ENCODE measurements at regions of chr1 and their contacts with region 1.

Region 1: GRCh38 chr1:89198491-89199072 is at the start of gene GBP4:
- DNase-seq: peak; percentile 65
- H3K4me3 Mint-ChIP-seq: peak within 1 kb of the TSS; percentile 92
- H3K27ac Mint-ChIP-seq: peak within 1 kb of the TSS; percentile 98
- H3K4me1 Mint-ChIP-seq: peaks cover 84% of the 10 kb centered on the region
- H3K27me3 Mint-ChIP-seq: no peaks in the 10 kb centered on the region
- total RNA-seq, gene GBP4: 22.9 to 23.2 TPM

Region 2: GRCh38 chr1:88983791-88984559 is 214.6 kb before region 1 on chr1:
- CTCF ChIA-PET with region 1: interaction called, 4 read pairs
- intact Hi-C with region 1: loop called (anchors 2 kb)
- DNase-seq: peak; percentile 42
- H3K4me3 Mint-ChIP-seq: peak overlapping the region; percentile 27
- H3K27ac Mint-ChIP-seq: peak overlapping the region; percentile 47
- H3K4me1 Mint-ChIP-seq: peaks cover 80% of the 10 kb centered on the region
- H3K27me3 Mint-ChIP-seq: no peaks in the 10 kb centered on the region

Region 3: GRCh38 chr1:89065079-89065868 is 133.3 kb before region 1 on chr1 and contains the start of gene GBP1:
- CTCF ChIA-PET with region 1: interaction called, 4 read pairs
- intact Hi-C with region 1: loop called (anchors 1 kb)
- DNase-seq: no peak
- H3K4me3 Mint-ChIP-seq: peak within 1 kb of the TSS; percentile 75
- H3K27ac Mint-ChIP-seq: peak within 1 kb of the TSS; percentile 89
- H3K4me1 Mint-ChIP-seq: peaks cover 53% of the 10 kb centered on the region
- H3K27me3 Mint-ChIP-seq: no peaks in the 10 kb centered on the region
- total RNA-seq, gene GBP1: 48.2 to 52.8 TPM

Region 4: DNA sequence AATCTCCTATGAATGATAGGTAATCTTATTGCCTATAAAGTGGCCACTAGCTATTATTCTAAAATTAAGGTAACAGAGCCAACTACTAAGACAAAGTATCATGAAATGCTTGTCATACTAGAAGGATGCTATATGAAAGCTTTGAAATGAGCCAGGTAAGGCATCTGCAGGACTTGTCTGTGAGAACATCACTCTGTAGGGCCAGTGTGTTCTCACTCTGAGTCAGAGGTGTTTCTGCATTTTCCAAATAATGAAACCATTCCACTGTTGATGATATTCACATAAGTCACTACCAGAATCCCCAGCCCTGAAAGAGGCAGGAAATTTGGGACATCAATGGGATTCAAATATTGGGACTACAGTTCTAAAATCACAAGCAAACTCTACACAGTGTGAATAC is 99.9 kb after region 1 on chr1:
- CTCF ChIA-PET with region 1: interaction called, 4 read pairs
- intact Hi-C with region 1: loop called (anchors 1 kb)
- DNase-seq: no peak
- H3K4me3 Mint-ChIP-seq: no peak overlapping the region
- H3K27ac Mint-ChIP-seq: no peak overlapping the region
- H3K4me1 Mint-ChIP-seq: peaks cover 55% of the 10 kb centered on the region
- H3K27me3 Mint-ChIP-seq: no peaks in the 10 kb centered on the region

Region 5: DNA sequence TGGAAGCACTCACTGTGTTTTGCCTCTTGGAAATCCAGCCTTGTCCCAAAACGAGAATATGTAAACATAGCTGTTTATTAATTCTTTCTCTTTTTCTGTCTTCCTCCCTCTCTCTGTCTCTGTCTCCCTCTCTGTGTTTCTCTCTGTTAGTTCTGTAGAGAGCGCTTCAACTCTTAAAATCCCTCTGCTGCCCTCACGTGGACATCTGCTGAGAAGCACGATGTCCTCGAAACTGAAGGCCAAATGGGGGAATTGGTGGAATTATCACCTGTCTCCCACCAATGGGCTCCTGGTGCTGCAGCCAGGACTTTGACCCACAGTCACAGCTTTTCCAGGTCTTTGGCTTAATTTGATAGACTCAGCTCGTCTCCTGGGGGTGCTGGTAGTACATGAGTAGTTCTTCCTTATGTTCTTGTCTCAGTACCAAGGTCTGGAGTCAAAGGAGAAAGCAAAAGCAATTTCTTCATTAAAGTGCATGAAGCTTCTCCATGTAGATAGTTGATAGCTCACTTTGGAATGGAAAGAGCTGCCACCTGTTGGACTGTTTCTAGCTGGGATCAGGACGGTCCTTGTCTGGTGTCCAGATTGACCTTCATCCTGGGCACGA is 159.8 kb after region 1 on chr1:
- CTCF ChIA-PET with region 1: interaction called, 6 read pairs
- intact Hi-C with region 1: loop called (anchors 1 kb)
- DNase-seq: peak; percentile 91
- H3K4me3 Mint-ChIP-seq: peak overlapping the region; percentile 33
- H3K27ac Mint-ChIP-seq: peak overlapping the region; percentile 65
- H3K4me1 Mint-ChIP-seq: peaks cover 33% of the 10 kb centered on the region
- H3K27me3 Mint-ChIP-seq: no peaks in the 10 kb centered on the region

Region 6: GRCh38 chr1:89605692-89606091 is 407.1 kb after region 1 on chr1:
- CTCF ChIA-PET with region 1: no interaction called
- intact Hi-C with region 1: loop called (anchors 2 kb)
- DNase-seq: no peak
- H3K4me3 Mint-ChIP-seq: no peak overlapping the region
- H3K27ac Mint-ChIP-seq: no peak overlapping the region
- H3K4me1 Mint-ChIP-seq: peaks cover 95% of the 10 kb centered on the region
- H3K27me3 Mint-ChIP-seq: no peaks in the 10 kb centered on the region

Measured in activated naive CD4-positive, alpha-beta T cell treated with anti-CD3 and anti-CD28 coated beads for 36 hours (primary cell).